IMR-90 (cell line): ENCODE measurements at regions of chr14 and their contacts with region 1.

Region 1: GRCh38 chr14:72439707-72440106 is 454.2 kb downstream of the DPF3 start:
- DNase-seq: no peak
- ATAC-seq: no peak
- H3K4me3 ChIP-seq: no peak overlapping the region
- H3K27ac ChIP-seq: no peak overlapping the region
- H3K4me1 ChIP-seq: no peaks in the 10 kb centered on the region
- H3K27me3 ChIP-seq: peaks cover 40% of the 10 kb centered on the region
- CTCF ChIP-seq: no peak
- POLR2A ChIP-seq: no peak
- RAD21 ChIP-seq: no peak

Region 2: GRCh38 chr14:72457641-72458040 is 17.9 kb after region 1 on chr14:
- CTCF ChIA-PET with region 1: no interaction called
- POLR2A ChIA-PET with region 1: interaction called, 11 read pairs
- dilution Hi-C with region 1: no loop called
- in situ Hi-C with region 1: no loop called
- intact Hi-C with region 1: no loop called
- DNase-seq: peak; percentile 83
- ATAC-seq: peak; percentile 81
- H3K4me3 ChIP-seq: no peak overlapping the region
- H3K27ac ChIP-seq: no peak overlapping the region
- H3K4me1 ChIP-seq: no peaks in the 10 kb centered on the region
- H3K27me3 ChIP-seq: peaks cover 22% of the 10 kb centered on the region
- CTCF ChIP-seq: no peak
- POLR2A ChIP-seq: no peak
- RAD21 ChIP-seq: no peak

Region 3: DNA sequence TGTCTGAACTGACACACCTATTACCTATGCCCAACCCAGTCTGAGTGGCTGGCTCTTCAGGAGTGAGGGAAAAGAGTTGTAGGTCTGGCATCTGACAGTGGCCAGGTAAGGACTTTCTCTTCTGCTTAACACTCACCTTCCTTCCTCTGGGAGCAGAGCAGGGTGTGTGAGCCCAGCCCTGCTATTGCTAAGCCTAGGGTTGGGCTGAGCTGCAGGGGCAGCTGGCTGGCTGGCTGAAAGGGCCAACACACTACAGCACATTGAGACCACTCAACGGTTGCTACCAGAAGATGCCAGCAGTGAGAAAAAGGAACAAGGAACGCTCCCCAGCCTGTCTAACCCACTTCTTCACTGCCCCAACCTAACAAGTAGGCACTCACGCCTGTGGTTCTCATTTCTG is 253.0 kb after region 1 on chr14:
- CTCF ChIA-PET with region 1: no interaction called
- POLR2A ChIA-PET with region 1: no interaction called
- dilution Hi-C with region 1: no loop called
- in situ Hi-C with region 1: no loop called
- intact Hi-C with region 1: no loop called
- DNase-seq: no peak
- ATAC-seq: no peak
- H3K4me3 ChIP-seq: no peak overlapping the region
- H3K27ac ChIP-seq: no peak overlapping the region
- H3K4me1 ChIP-seq: no peaks in the 10 kb centered on the region
- H3K27me3 ChIP-seq: no peaks in the 10 kb centered on the region
- CTCF ChIP-seq: no peak
- POLR2A ChIP-seq: no peak
- RAD21 ChIP-seq: no peak